HEK293 (cell line): ENCODE measurements at regions of chr1 and their contacts with region 1.

Region 1: GRCh38 chr1:69572921-69573320 is 5.2 kb downstream of the LRRC7 start:
- H3K4me3 ChIP-seq: no peak overlapping the region
- H3K27ac ChIP-seq: no peak overlapping the region
- H3K4me1 ChIP-seq: no peaks in the 10 kb centered on the region
- CTCF ChIP-seq: no peak

Region 2: GRCh38 chr1:68975212-68975933 is 597.5 kb before region 1 on chr1:
- CTCF ChIA-PET with region 1: no interaction called
- POLR2A ChIA-PET with region 1: no interaction called
- H3K4me3 ChIP-seq: no peak overlapping the region
- H3K27ac ChIP-seq: no peak overlapping the region
- H3K4me1 ChIP-seq: no peaks in the 10 kb centered on the region
- CTCF ChIP-seq: no peak

Region 3: GRCh38 chr1:70440642-70441378 is 867.9 kb after region 1 on chr1:
- CTCF ChIA-PET with region 1: interaction called, 12 read pairs
- POLR2A ChIA-PET with region 1: no interaction called
- H3K4me3 ChIP-seq: no peak overlapping the region
- H3K27ac ChIP-seq: no peak overlapping the region
- H3K4me1 ChIP-seq: no peaks in the 10 kb centered on the region
- CTCF ChIP-seq: no peak